Ascending aorta (tissue), 2 donors: ENCODE measurements at regions of chr13 and their contacts with region 1.

Region 1: GRCh38 chr13:102394158-102395053 is 7.4 kb downstream of the FGF14 start:
- DNase-seq: peak; percentile 58 to 95
- H3K4me3 ChIP-seq: peak overlapping the region; percentile 70 to 84
- H3K27ac ChIP-seq: peak overlapping the region; percentile 72 to 80
- H3K4me1 ChIP-seq: peaks cover 0 to 7% of the 10 kb centered on the region in 2 donors
- H3K27me3 ChIP-seq: no peaks in the 10 kb centered on the region
- CTCF ChIP-seq: no peak

Region 2: DNA sequence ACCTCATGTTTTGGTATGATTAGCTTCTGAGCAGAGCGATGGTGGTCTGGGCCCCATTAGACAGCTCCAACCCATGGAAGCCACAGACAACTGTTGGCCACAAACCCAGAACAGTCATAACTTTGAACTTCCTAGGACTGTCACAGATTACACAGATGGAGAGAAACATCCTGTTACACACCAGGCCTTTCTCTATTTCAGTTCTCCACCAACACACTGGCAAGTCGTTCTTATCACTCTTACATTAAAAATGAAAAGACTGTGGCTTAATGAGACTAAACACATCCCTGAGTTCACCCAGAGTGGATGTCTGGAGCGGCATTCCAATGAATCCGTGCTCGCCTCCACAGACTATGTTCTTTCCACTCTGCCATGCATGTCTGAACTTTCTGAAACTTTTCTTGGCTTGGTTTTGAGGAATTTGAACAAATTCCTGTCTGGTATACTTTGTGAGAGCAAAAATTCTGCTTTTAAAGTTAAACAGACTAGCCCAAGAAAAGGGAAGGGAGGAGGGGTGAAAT is 1087.2 kb before region 1 on chr13:
- intact Hi-C with region 1: loop called (anchors 10 kb)
- DNase-seq: peak in 1 of 2 donors; percentile 74
- H3K4me3 ChIP-seq: no peak overlapping the region
- H3K27ac ChIP-seq: peak overlapping the region; percentile 73 to 80
- H3K4me1 ChIP-seq: peaks cover 0 to 32% of the 10 kb centered on the region in 2 donors
- H3K27me3 ChIP-seq: no peaks in the 10 kb centered on the region
- CTCF ChIP-seq: no peak

Region 3: DNA sequence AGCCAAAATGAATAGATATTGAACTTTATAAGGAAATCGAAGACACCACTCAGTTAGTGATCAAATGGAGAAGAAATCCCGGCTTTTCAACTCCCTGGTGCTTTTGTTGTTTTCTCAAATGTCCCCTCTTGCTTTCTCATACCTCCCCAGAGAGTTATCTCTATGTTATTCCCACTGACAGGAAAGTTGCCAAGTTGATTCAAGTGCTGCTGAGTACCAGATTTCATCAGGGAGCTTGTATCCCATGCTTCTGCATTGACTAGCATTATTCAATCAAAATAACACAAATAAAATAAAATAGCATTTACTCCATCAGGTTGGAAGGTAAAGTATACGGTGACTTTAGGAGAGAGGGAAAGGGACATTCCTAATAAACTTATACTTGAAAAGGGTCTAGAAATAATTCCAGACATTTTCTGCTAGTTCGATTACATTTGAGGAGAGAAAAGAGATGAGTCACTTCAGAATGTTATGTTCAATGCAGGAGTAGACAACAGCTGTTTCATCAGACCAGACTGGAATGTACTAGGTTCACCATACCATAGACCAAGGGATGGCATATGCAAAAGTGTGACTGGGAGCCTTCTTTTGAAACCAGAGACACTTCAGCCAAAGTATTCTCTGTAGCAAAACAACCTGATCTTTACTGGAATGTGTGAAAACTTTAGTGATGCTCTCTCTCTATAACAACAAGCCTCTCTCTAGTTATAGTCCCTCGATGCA is 390.4 kb before region 1 on chr13:
- intact Hi-C with region 1: loop called (anchors 10 kb)
- DNase-seq: no peak
- H3K4me3 ChIP-seq: no peak overlapping the region
- H3K27ac ChIP-seq: peak overlapping the region; percentile 27 to 36
- H3K4me1 ChIP-seq: peaks cover 0 to 12% of the 10 kb centered on the region in 2 donors
- H3K27me3 ChIP-seq: no peaks in the 10 kb centered on the region
- CTCF ChIP-seq: no peak

Region 4: GRCh38 chr13:102773441-102774215 is 379.2 kb after region 1 on chr13 and contains the start of gene TEX30:
- intact Hi-C with region 1: loop called (anchors 10 kb)
- DNase-seq: peak; percentile 38 to 91
- H3K4me3 ChIP-seq: peak within 1 kb of the TSS; percentile 68 to 84
- H3K27ac ChIP-seq: peak within 1 kb of the TSS; percentile 82 to 87
- H3K4me1 ChIP-seq: peaks cover 4 to 9% of the 10 kb centered on the region in 2 donors
- H3K27me3 ChIP-seq: no peaks in the 10 kb centered on the region
- CTCF ChIP-seq: peak in 1 of 3 experiments; percentile 10
- total RNA-seq, gene TEX30: 1.4 TPM

Region 5: GRCh38 chr13:102845630-102846260 is 451.3 kb after region 1 on chr13 and contains the start of gene ERCC5:
- intact Hi-C with region 1: loop called (anchors 5 kb)
- DNase-seq: peak; percentile 74 to 96
- H3K4me3 ChIP-seq: peak within 1 kb of the TSS; percentile 69 to 91
- H3K27ac ChIP-seq: peak within 1 kb of the TSS; percentile 95
- H3K4me1 ChIP-seq: peaks cover 0 to 4% of the 10 kb centered on the region in 2 donors
- H3K27me3 ChIP-seq: no peaks in the 10 kb centered on the region
- CTCF ChIP-seq: no peak
- total RNA-seq, gene ERCC5: 26.2 TPM